ENCODE measurements at regions of chr20 and their contacts with region 1.

Region 1: GRCh38 chr20:44572541-44573500 is 9.6 kb upstream of the PKIG start:
- DNase-seq: peak; percentile 89
- ATAC-seq: peak; percentile 72
- H3K4me3 ChIP-seq: peak overlapping the region; percentile 9; the same call in 1 of the 2 replicates
- H3K27ac ChIP-seq: peak overlapping the region; percentile 93
- H3K4me1 ChIP-seq: peaks cover 15% of the 10 kb centered on the region
- H3K27me3 ChIP-seq: no peaks in the 10 kb centered on the region
- CTCF ChIP-seq: no peak
- POLR2A ChIP-seq: peak; percentile 74; the same call in 1 of the 2 replicates
- RAD21 ChIP-seq: no peak; the same call in 1 of the 2 replicates

Region 2: DNA sequence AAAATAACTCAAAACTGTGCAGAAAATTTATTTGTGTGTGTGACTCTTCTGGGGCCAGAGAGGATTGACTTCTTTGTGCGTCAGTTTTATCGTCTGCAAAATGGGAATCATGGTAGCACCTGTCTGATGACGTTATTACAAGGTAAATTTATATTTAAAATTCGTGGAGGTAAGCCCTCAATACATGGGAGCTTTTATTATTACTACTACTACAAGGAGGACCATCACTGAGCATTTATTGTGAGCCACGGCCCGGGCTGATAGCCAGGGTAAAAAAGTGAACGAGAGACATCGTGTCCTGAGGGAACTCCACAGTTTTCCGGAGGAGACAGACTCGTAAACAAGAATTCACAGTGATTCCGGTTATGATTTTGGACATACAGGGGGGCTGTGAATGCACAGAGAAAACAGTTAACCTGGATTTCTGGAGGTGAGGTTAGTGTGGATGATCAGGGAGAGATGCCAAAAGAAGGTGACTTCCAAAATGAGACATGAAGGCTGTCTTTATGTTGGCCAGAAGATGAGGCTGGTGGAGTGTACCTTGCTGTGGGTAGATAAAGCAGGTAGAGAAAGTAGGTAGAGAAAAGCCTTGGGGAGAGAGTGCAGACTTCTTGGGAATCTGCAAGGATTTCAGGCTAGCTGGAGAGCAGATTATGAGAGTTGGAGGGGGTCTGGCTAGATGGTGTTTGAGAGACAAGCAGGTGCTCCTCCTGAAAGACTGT is 40.4 kb before region 1 on chr20:
- CTCF ChIA-PET with region 1: no interaction called
- POLR2A ChIA-PET with region 1: no interaction called
- dilution Hi-C with region 1: no loop called
- in situ Hi-C with region 1: no loop called
- intact Hi-C with region 1: loop called (anchors 5 kb)
- DNase-seq: no peak
- ATAC-seq: no peak
- H3K4me3 ChIP-seq: peak overlapping the region; percentile 45
- H3K27ac ChIP-seq: peak overlapping the region; percentile 54; the same call in 1 of the 2 replicates
- H3K4me1 ChIP-seq: peaks cover 3% of the 10 kb centered on the region
- H3K27me3 ChIP-seq: no peaks in the 10 kb centered on the region
- CTCF ChIP-seq: no peak
- POLR2A ChIP-seq: no peak
- RAD21 ChIP-seq: no peak

Region 3: DNA sequence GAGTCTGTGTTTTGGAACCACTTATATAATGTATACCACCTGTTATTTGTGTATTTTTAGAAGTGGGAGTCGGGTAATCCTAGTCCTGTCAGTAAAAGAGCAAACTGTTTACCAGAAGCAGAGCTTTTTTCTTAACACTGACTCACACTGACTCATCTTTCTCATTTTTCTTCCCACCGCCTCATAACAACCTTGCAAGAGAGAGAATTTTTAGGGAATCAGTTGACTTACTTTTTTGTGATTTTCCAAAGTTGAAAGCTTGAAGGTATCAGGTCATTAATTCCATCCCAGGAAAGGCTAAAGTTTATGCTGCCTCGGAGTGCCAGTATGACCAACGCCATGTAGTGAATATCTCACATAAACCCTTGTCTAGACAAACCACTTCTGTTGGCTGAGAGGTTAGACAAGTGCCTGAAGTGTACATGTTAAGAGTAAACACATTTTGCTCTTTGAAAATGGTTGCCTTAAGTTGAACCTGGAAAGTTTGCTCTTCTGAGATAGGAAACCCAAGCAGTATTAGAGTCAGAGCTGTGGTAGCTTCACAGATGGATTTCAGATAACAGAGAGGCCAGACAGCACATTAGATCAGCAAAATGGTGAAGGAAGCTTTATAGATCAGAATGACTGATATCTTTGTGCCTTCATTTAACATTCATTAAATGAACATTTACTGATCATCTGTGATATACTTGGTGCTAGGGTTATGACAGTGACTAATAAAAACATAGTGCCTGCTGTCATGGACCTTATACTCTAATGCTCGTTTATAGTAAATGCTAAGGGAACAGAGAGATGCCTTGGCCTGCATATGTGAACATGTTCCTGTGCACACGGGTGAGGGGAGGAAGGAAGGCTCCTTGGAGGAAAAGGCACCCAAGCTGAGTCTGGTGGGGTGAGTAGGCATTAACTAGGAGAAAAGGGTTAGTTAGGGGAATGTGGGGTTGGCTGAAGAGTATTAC is 19.6 kb before region 1 on chr20:
- CTCF ChIA-PET with region 1: no interaction called
- POLR2A ChIA-PET with region 1: no interaction called
- dilution Hi-C with region 1: no loop called
- in situ Hi-C with region 1: no loop called
- intact Hi-C with region 1: loop called (anchors 2 kb)
- DNase-seq: peak; percentile 94
- ATAC-seq: peak; percentile 79
- H3K4me3 ChIP-seq: no peak overlapping the region
- H3K27ac ChIP-seq: peak overlapping the region; percentile 19; the same call in 1 of the 2 replicates
- H3K4me1 ChIP-seq: peaks cover 15% of the 10 kb centered on the region
- H3K27me3 ChIP-seq: no peaks in the 10 kb centered on the region
- CTCF ChIP-seq: no peak
- POLR2A ChIP-seq: no peak
- RAD21 ChIP-seq: no peak

Region 4: DNA sequence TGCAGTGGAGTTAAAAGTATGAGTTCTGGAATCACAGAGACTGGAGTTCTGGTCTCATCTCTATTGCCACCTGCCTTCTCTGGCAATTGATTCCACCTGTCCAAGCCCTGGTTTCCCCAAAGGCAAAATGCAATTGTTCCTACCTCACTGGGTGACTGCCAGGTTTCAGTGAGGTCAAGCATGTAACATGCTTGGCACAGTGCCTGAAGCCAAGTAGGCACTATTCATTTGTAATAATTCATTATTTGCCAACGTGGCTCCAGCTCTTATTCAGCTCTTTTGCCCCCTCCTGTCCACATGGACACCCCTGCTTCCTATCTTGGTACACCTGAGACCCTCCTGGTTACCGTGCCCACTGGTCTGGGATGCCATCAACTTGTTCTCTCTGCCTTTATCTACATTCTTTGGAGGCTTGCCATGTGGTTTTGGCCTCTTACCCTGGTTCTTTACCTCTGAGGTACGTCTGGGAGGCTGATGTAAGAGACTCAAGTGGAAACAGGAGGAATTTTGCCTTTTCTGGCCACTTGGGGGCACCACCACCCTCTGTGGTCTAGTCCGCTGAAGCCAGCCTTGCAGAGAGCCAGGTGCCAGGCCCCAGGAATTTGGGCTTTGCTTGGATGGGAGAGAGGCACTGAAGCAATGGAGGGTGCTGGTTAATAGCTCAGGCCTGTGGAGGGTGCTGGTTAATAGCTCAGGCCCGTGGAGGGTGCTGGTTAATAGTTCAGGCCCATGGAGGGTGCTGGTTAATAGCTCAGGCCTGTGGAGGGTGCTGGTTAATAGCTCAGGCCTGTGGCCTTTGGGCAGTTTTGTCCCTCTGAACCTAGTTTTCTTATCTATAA is 174.6 kb after region 1 on chr20:
- CTCF ChIA-PET with region 1: no interaction called
- POLR2A ChIA-PET with region 1: no interaction called
- dilution Hi-C with region 1: no loop called
- in situ Hi-C with region 1: no loop called
- intact Hi-C with region 1: no loop called
- DNase-seq: peak; percentile 53
- ATAC-seq: peak; percentile 64
- H3K4me3 ChIP-seq: no peak overlapping the region
- H3K27ac ChIP-seq: no peak overlapping the region
- H3K4me1 ChIP-seq: peaks cover 1% of the 10 kb centered on the region; the same call in 1 of the 2 replicates
- H3K27me3 ChIP-seq: peaks cover 82% of the 10 kb centered on the region
- CTCF ChIP-seq: peak; percentile 66
- POLR2A ChIP-seq: no peak
- RAD21 ChIP-seq: peak; percentile 54

Region 5: DNA sequence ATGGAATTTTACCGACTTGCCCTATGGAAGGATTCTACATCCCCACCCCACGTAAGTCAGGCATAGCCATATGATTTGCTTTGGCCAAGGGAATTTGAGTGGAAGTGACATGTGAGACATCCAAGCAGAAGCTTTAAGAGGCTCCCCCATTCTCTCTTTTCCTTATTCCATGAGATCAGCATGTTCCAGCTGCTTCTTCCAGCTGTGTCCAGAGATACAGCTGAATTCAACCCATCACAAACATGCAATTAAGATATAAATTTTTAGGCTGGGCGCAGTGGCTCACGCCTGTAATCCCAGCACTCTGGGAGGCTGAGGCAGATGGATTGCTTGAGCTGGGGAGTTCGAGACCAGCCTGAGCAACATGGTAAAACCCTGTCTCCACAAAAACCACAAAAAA is 296.6 kb after region 1 on chr20:
- CTCF ChIA-PET with region 1: no interaction called
- POLR2A ChIA-PET with region 1: no interaction called
- dilution Hi-C with region 1: no loop called
- in situ Hi-C with region 1: no loop called
- intact Hi-C with region 1: no loop called
- DNase-seq: no peak
- ATAC-seq: no peak
- H3K4me3 ChIP-seq: no peak overlapping the region
- H3K27ac ChIP-seq: no peak overlapping the region
- H3K4me1 ChIP-seq: no peaks in the 10 kb centered on the region
- H3K27me3 ChIP-seq: peaks cover 29% of the 10 kb centered on the region
- CTCF ChIP-seq: no peak
- POLR2A ChIP-seq: no peak
- RAD21 ChIP-seq: no peak

Measured in IMR-90 (cell line).